Ovary (tissue), 10 donors: ENCODE measurements at regions of chr1 and their contacts with region 1.

Region 1: DNA sequence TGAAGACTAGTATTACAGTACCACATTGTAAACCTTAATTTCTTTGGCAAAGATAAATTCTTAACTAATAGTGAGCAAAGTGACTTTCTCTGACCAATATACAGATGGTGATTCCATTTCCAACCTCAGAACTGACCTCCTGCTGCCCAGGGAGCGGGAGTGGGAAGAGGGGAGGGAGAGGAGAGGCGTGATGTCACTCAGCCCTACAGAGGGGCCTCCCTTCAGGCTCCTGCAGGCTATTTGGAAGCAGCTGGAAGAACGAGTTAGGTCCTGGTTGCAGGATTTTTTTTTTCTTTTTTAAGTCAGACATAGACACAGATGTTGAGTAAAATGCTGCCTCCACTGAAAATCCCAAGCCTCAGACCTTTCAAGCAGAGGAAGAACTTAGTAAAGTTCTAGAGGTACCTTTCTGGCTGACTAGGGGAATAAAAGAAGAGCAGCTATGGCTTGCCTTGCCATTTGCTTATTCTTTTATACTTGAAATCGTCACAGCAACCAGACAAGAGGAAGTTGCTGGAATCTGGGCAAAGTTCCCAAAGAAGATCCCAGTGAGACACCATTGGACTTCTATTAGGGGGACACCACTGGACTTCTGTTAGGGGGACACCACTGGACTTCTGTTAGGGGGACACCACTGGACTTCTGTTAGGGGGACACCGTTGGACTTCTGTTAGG is 54.5 kb downstream of the EXO1 start:
- DNase-seq: no peak
- H3K4me3 ChIP-seq: no peak overlapping the region
- H3K27ac ChIP-seq: no peak overlapping the region
- H3K4me1 ChIP-seq: no peaks in the 10 kb centered on the region
- H3K27me3 ChIP-seq: no peaks in the 10 kb centered on the region
- CTCF ChIP-seq: no peak
- EP300 ChIP-seq: no peak
- POLR2A ChIP-seq: no peak

Region 2: DNA sequence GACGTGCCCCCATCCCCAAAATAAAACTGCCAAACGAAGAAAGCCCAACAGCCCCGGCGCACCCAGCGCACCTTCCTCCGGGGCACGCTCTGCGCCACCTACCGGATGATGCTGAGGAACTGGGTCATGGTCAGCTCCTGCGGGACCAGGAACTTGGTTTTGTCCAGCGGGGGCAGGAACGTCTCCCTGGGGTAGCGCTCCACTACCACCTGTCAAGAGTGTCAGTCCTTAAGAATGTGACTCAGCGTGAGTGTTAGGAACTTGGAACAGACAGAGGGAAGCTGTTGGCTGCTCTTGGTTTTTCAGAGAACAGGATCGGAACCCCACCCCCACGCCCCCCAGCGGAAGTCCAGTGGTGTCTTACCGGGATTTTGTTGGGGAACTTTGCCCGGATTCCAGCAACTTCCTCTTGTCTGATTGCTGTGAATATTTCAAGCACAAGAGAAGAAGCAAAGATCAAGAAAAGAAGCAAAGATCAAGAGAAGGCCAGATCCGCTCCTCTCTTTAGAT is 95.9 kb after region 1 on chr1:
- intact Hi-C with region 1: loop called in 3 of 4 experiments (anchors 10 kb)
- DNase-seq: peak; percentile 72 to 82 (median 80)
- H3K4me3 ChIP-seq: peak overlapping the region; percentile 12
- H3K27ac ChIP-seq: peak overlapping the region in 1 of 2 donors; percentile 36
- H3K4me1 ChIP-seq: no peaks in the 10 kb centered on the region
- H3K27me3 ChIP-seq: no peaks in the 10 kb centered on the region
- CTCF ChIP-seq: peak; percentile 58 to 67 (median 65)
- EP300 ChIP-seq: no peak
- POLR2A ChIP-seq: no peak

Region 3: GRCh38 chr1:242005866-242006565 is 103.5 kb after region 1 on chr1:
- intact Hi-C with region 1: loop called in 1 of 4 experiments (anchors 10 kb)
- DNase-seq: no peak
- H3K4me3 ChIP-seq: no peak overlapping the region
- H3K27ac ChIP-seq: no peak overlapping the region
- H3K4me1 ChIP-seq: no peaks in the 10 kb centered on the region
- H3K27me3 ChIP-seq: no peaks in the 10 kb centered on the region
- CTCF ChIP-seq: no peak
- EP300 ChIP-seq: no peak
- POLR2A ChIP-seq: no peak